A549 (cell line): ENCODE measurements at regions of chr1 and their contacts with region 1.

Region 1: GRCh38 chr1:176897350-176898236 is 266.9 kb downstream of the ASTN1 start:
- DNase-seq: peak; percentile 52 to 80
- ATAC-seq: peak; percentile 73 to 92; a peak in 5 of 6 replicates
- H3K4me3 ChIP-seq: peak overlapping the region; percentile 8; the same call in 2 of the 3 replicates
- H3K27ac ChIP-seq: no peak overlapping the region
- H3K4me1 ChIP-seq: no peaks in the 10 kb centered on the region
- CTCF ChIP-seq: peak; percentile 68
- EP300 ChIP-seq: no peak
- POLR2A ChIP-seq: no peak
- RAD21 ChIP-seq: peak; percentile 74 to 79

Region 2: GRCh38 chr1:176880954-176881595 is 16.5 kb before region 1 on chr1:
- CTCF ChIA-PET with region 1: interaction called, 10 read pairs
- POLR2A ChIA-PET with region 1: no interaction called
- DNase-seq: peak; percentile 66 to 69
- ATAC-seq: peak; percentile 88 to 96; a peak in 5 of 6 replicates
- H3K4me3 ChIP-seq: no peak overlapping the region
- H3K27ac ChIP-seq: no peak overlapping the region
- H3K4me1 ChIP-seq: no peaks in the 10 kb centered on the region
- CTCF ChIP-seq: peak; percentile 70
- EP300 ChIP-seq: no peak
- POLR2A ChIP-seq: no peak
- RAD21 ChIP-seq: peak; percentile 76 to 83

Region 3: GRCh38 chr1:177355595-177355994 is 458.0 kb after region 1 on chr1:
- CTCF ChIA-PET with region 1: interaction called, 12 read pairs
- POLR2A ChIA-PET with region 1: no interaction called
- DNase-seq: peak in 1 of 2 experiments; percentile 13
- ATAC-seq: peak; percentile 84 to 91; a peak in 5 of 6 replicates
- H3K4me3 ChIP-seq: no peak overlapping the region
- H3K27ac ChIP-seq: no peak overlapping the region
- H3K4me1 ChIP-seq: no peaks in the 10 kb centered on the region
- CTCF ChIP-seq: no peak
- EP300 ChIP-seq: no peak
- POLR2A ChIP-seq: no peak
- RAD21 ChIP-seq: peak; percentile 51 to 59